Heart right ventricle (tissue), 16 donors: ENCODE measurements at regions of chr9 and their contacts with region 1.

Region 1: DNA sequence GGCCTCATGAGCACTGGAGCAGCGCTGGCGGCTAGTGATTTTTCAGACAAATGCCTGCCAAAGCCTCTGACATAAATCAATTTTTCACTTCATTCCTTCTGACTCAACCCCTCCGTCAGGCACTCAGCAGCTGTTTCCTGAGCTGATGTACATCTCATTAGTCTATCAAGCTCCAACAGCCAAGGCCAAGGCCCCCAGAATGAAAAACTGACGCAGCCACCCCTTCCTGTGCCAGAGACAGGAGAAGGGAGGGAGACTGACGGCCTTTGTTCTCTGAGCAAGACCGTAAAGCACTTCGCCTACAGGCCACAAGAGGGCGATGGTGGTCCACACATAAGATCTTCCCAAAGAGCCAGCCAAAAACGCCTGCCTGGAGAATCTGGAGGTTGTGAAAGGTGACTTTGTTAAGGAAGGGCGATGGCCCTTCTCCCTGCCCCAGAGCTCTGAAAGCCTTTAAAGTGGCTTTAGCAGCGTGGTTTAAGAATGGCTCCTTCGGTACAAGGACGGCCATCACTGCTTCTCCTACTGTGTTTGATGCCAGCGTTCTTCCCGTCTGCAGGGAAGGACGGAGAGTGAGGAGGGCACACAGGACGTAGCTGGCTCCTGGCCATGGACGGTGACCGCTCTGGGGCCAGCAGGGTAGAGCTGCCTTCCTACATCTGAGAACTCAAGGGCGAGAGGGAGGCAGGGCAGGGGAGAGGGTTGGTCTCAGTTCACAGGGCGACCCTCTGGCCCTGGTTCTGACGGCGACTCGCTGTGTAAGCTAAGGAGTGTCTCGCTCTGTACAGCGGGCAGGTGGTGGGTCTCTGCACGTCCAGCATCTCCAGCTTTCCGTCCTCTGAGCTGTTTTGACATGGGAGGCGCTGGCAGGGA is 37.0 kb downstream of the ALG2 start:
- DNase-seq: peak; percentile 81 to 89
- ATAC-seq: peak; percentile 79 to 95 (median 92)
- H3K4me3 ChIP-seq: peak overlapping the region in 8 of 10 donors; percentile 9 to 46 (median 34)
- H3K27ac ChIP-seq: peak overlapping the region in 6 of 10 donors; percentile 0 to 54 (median 43)
- H3K4me1 ChIP-seq: peaks cover 0 to 22% (median 9%) of the 10 kb centered on the region in 9 donors
- H3K27me3 ChIP-seq: no peaks in the 10 kb centered on the region
- CTCF ChIP-seq: peak; percentile 91 to 97 (median 96)

Region 2: DNA sequence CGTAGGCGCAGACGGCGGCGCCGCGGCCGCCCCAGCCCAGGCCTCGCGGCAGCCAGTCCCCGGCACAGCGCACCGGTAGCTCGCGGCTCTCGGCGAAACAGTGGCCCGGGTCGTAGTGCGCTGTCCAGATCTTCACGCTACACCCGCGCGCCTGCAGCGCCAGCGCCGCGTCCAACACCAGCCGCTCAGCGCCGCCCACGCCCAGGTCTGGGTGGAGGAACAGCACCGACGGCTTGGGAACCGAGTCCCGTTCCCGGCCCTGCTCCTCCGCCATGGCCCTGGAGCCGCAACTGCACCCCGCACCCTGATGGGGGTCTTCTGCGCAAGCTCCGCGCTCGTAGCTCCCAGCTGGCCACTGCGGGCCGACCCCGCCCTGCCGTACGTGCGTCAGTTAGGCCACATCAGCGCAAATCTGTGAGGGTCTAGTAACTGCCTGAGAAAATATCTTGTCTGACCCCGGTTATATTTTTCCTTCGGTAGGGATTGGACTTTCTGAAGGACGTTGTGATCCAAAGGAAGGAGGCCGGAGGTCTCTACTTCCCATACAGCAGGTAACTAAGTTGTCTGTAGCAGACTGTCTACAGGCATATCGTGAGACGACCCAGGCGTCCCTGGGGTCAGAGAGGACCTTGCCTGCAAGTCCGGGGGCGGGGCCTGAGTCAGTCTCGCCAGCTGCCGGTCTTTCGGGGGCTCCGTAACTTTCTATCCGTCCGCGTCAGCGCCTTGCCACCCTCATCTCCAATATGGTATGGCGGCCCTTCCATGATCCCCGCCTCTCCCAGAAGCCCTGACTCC is 37.1 kb after region 1 on chr9 and contains the starts of genes ALG2 and SEC61B:
- intact Hi-C with region 1: loop called in 1 of 10 experiments (anchors 5 kb)
- DNase-seq: peak; percentile 93 to 97
- ATAC-seq: peak; percentile 98 to 99 (median 99)
- H3K4me3 ChIP-seq: peak within 1 kb of the TSS; percentile 65 to 97 (median 88)
- H3K27ac ChIP-seq: peak within 1 kb of the TSS; percentile 87 to 96 (median 93)
- H3K4me1 ChIP-seq: peaks cover 14 to 85% (median 72%) of the 10 kb centered on the region in 9 donors
- H3K27me3 ChIP-seq: no peaks in the 10 kb centered on the region
- CTCF ChIP-seq: peak in 1 of 9 donors; percentile 21
- total RNA-seq, gene ALG2: 10.6 to 27.3 (median 15.0) TPM
- total RNA-seq, gene SEC61B: 24.1 to 72.6 (median 32.9) TPM

Region 3: GRCh38 chr9:100011062-100011681 is 826.5 kb after region 1 on chr9:
- intact Hi-C with region 1: loop called in 1 of 10 experiments (anchors 10 kb)
- DNase-seq: no peak
- ATAC-seq: no peak
- H3K4me3 ChIP-seq: no peak overlapping the region
- H3K27ac ChIP-seq: no peak overlapping the region
- H3K4me1 ChIP-seq: no peaks in the 10 kb centered on the region
- H3K27me3 ChIP-seq: no peaks in the 10 kb centered on the region
- CTCF ChIP-seq: peak in 7 of 9 donors; percentile 44 to 64 (median 57)

Region 4: GRCh38 chr9:100309992-100310391 is 1125.3 kb after region 1 on chr9:
- intact Hi-C with region 1: loop called in 1 of 10 experiments (anchors 10 kb)
- DNase-seq: no peak
- ATAC-seq: no peak
- H3K4me3 ChIP-seq: no peak overlapping the region
- H3K27ac ChIP-seq: no peak overlapping the region
- H3K4me1 ChIP-seq: peaks cover 0 to 9% (median 0%) of the 10 kb centered on the region in 9 donors
- H3K27me3 ChIP-seq: no peaks in the 10 kb centered on the region
- CTCF ChIP-seq: no peak